ENCODE measurements at regions of chr6 and their contacts with region 1.

Region 1: DNA sequence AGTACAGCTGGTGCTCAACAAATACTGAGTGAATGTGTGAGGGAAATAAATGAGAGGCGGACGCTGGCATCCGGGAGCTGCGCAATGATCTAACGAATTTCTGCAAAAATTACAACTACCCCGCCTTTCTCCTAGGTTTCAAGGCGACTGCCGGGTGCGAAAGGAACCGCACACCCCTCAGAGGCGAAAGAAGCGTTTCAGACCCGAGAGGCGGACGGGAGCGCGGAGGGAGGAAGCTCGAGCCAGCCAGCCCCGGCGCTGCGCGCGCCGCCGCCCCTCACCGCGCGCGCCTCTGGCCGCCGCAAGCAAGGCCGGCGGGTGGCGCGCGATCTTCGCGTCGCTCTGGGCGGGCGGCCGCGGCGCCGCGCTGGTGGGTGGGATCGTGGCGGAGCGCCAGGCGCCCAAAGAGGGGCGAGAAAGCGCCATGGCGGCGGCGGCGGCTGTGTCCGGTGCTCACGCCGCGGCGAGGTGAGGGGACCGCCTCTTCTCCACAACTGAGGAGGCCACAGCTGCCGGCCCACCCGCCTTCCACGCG is at the start of gene BLTP3A:
- DNase-seq: peak; percentile 74 to 78 (median 75)
- H3K4me3 ChIP-seq: peak within 1 kb of the TSS; percentile 79 to 85
- H3K4me3 Mint-ChIP-seq: peak within 1 kb of the TSS; percentile 91 to 99 (median 98)
- H3K27ac ChIP-seq: peak within 1 kb of the TSS; percentile 72
- H3K27ac Mint-ChIP-seq: peak within 1 kb of the TSS; percentile 91 to 97 (median 95)
- H3K4me1 ChIP-seq: peaks cover 23% of the 10 kb centered on the region
- H3K4me1 Mint-ChIP-seq: peaks cover 15 to 36% (median 21%) of the 10 kb centered on the region in 4 donors
- H3K27me3 ChIP-seq: no peaks in the 10 kb centered on the region
- H3K27me3 Mint-ChIP-seq: no peaks in the 10 kb centered on the region
- total RNA-seq, gene BLTP3A: 11.5 to 12.0 TPM

Region 2: GRCh38 chr6:34526992-34527728 is 264.6 kb before region 1 on chr6:
- CTCF ChIA-PET with region 1: no interaction called
- POLR2A ChIA-PET with region 1: interaction called, 3 read pairs
- intact Hi-C with region 1: loop called (anchors 5 kb)
- DNase-seq: peak; percentile 93 to 94 (median 93)
- H3K4me3 ChIP-seq: peak overlapping the region in 1 of 2 donors; percentile 20
- H3K4me3 Mint-ChIP-seq: peak overlapping the region in 6 of 8 donors; percentile 57 to 70 (median 64)
- H3K27ac ChIP-seq: no peak overlapping the region
- H3K27ac Mint-ChIP-seq: peak overlapping the region; percentile 27 to 78 (median 68)
- H3K4me1 ChIP-seq: peaks cover 15% of the 10 kb centered on the region
- H3K4me1 Mint-ChIP-seq: peaks cover 5 to 17% (median 7%) of the 10 kb centered on the region in 4 donors
- H3K27me3 ChIP-seq: no peaks in the 10 kb centered on the region
- H3K27me3 Mint-ChIP-seq: no peaks in the 10 kb centered on the region

Region 3: GRCh38 chr6:34680802-34681515 is 110.8 kb before region 1 on chr6:
- CTCF ChIA-PET with region 1: no interaction called
- POLR2A ChIA-PET with region 1: no interaction called
- intact Hi-C with region 1: no loop called
- DNase-seq: no peak
- H3K4me3 ChIP-seq: no peak overlapping the region
- H3K4me3 Mint-ChIP-seq: no peak overlapping the region
- H3K27ac ChIP-seq: no peak overlapping the region
- H3K27ac Mint-ChIP-seq: no peak overlapping the region
- H3K4me1 ChIP-seq: peaks cover 32% of the 10 kb centered on the region
- H3K4me1 Mint-ChIP-seq: peaks cover 27 to 42% (median 32%) of the 10 kb centered on the region in 4 donors
- H3K27me3 ChIP-seq: no peaks in the 10 kb centered on the region
- H3K27me3 Mint-ChIP-seq: no peaks in the 10 kb centered on the region

Region 4: DNA sequence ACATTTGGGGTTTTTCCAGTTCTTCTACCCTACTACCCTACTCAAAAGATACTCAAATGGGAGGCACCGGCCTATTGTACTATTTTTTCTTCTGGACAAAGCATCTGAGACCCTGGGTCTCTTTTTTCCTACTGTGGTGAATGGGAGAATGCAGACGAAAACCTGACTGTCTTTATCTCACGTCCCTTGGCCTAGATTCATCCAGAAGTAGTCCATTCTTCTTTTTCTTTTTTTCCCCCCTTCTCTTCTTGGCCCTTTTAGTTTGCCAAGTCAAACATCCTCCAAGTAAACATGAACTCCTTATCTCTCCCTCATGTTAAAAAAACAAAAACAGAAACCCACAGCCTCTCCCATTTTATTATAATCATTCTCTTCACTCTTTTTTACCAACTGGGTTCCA is 86.5 kb before region 1 on chr6:
- CTCF ChIA-PET with region 1: no interaction called
- POLR2A ChIA-PET with region 1: no interaction called
- intact Hi-C with region 1: no loop called
- DNase-seq: no peak
- H3K4me3 ChIP-seq: no peak overlapping the region
- H3K4me3 Mint-ChIP-seq: no peak overlapping the region
- H3K27ac ChIP-seq: no peak overlapping the region
- H3K27ac Mint-ChIP-seq: peak overlapping the region in 4 of 7 donors; percentile 15 to 63 (median 41)
- H3K4me1 ChIP-seq: no peaks in the 10 kb centered on the region
- H3K4me1 Mint-ChIP-seq: peaks cover 0 to 8% (median under 1%) of the 10 kb centered on the region in 4 donors
- H3K27me3 ChIP-seq: no peaks in the 10 kb centered on the region
- H3K27me3 Mint-ChIP-seq: peaks cover 0 to 2% of the 10 kb centered on the region in 2 donors

Region 5: DNA sequence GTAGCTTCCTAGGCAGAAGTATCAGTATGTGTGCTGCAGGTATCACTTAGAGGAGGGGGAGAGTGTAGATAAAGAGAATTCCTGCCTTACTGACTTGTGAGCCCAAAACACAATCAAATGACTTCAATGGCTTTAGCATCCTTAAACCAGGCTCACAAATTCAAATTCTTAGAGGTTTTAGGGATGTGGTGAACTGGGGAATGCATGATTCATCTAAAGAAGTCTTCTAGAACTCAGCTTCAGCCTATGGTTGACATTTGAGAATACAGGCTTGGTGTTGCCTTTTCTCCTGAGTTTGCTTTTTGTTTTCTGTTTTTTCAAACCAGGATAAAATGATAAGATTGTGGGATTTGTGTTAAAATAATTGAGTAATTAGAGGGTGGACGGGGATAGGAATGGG is 20.0 kb before region 1 on chr6:
- CTCF ChIA-PET with region 1: no interaction called
- POLR2A ChIA-PET with region 1: interaction called, 16 read pairs
- intact Hi-C with region 1: no loop called
- DNase-seq: no peak
- H3K4me3 ChIP-seq: no peak overlapping the region
- H3K4me3 Mint-ChIP-seq: no peak overlapping the region
- H3K27ac ChIP-seq: no peak overlapping the region
- H3K27ac Mint-ChIP-seq: peak overlapping the region in 1 of 7 donors; percentile 19
- H3K4me1 ChIP-seq: peaks cover 10% of the 10 kb centered on the region
- H3K4me1 Mint-ChIP-seq: peaks cover 2 to 20% (median 5%) of the 10 kb centered on the region in 4 donors
- H3K27me3 ChIP-seq: no peaks in the 10 kb centered on the region
- H3K27me3 Mint-ChIP-seq: no peaks in the 10 kb centered on the region

Region 6: GRCh38 chr6:34834789-34835518 is 43.2 kb after region 1 on chr6:
- CTCF ChIA-PET with region 1: no interaction called
- POLR2A ChIA-PET with region 1: no interaction called
- intact Hi-C with region 1: no loop called
- DNase-seq: no peak
- H3K4me3 ChIP-seq: no peak overlapping the region
- H3K4me3 Mint-ChIP-seq: no peak overlapping the region
- H3K27ac ChIP-seq: no peak overlapping the region
- H3K27ac Mint-ChIP-seq: no peak overlapping the region
- H3K4me1 ChIP-seq: no peaks in the 10 kb centered on the region
- H3K4me1 Mint-ChIP-seq: peaks cover 0 to 4% (median under 1%) of the 10 kb centered on the region in 4 donors
- H3K27me3 ChIP-seq: no peaks in the 10 kb centered on the region
- H3K27me3 Mint-ChIP-seq: no peaks in the 10 kb centered on the region

Region 7: DNA sequence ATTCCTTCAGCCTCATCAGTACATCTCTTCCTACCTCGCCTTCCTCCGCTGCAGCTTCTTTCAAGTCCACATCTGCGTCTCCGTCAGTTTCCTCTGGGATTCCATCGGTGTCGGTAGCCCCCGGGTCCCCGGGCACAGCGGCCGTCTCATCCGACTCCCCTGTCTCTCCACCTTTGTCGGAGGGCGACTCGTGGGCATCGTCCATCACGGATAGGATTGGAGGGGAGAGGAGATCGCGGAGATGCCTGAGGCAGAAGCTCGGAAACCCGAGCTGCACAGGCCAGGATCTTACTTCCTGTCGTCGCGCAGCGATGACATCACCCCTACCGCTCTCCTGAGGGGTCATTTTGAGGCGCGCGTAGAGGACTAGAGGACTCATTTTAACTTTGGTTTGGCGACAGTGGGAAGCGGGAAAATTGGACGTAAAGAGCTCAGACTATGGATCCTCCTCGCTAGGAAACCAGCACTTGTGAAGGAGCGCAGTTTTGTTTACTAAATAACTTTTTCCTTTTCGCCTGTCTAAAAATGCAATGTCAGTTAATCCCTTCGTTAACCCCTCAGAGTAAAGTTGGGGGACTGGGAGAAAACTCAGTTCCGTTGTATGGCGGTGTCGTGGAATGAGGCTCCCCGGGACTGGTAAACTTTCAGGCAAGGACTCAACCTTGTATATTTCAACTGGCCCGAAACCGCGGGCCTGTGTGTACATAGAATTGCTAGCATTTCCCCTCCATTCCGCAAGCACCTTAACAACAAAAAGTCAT is 96.2 kb after region 1 on chr6 and contains the start of gene TAF11:
- CTCF ChIA-PET with region 1: no interaction called
- POLR2A ChIA-PET with region 1: interaction called, 50 read pairs
- intact Hi-C with region 1: loop called (anchors 1 kb)
- DNase-seq: peak; percentile 87 to 93 (median 88)
- H3K4me3 ChIP-seq: peak within 1 kb of the TSS; percentile 70 to 91
- H3K4me3 Mint-ChIP-seq: peak within 1 kb of the TSS; percentile 97 to 100 (median 99)
- H3K27ac ChIP-seq: peak within 1 kb of the TSS; percentile 94
- H3K27ac Mint-ChIP-seq: peak within 1 kb of the TSS; percentile 95 to 100 (median 99)
- H3K4me1 ChIP-seq: peaks cover 31% of the 10 kb centered on the region
- H3K4me1 Mint-ChIP-seq: peaks cover 31 to 65% (median 52%) of the 10 kb centered on the region in 4 donors
- H3K27me3 ChIP-seq: no peaks in the 10 kb centered on the region
- H3K27me3 Mint-ChIP-seq: no peaks in the 10 kb centered on the region
- total RNA-seq, gene TAF11: 25.3 to 26.1 TPM

Region 8: DNA sequence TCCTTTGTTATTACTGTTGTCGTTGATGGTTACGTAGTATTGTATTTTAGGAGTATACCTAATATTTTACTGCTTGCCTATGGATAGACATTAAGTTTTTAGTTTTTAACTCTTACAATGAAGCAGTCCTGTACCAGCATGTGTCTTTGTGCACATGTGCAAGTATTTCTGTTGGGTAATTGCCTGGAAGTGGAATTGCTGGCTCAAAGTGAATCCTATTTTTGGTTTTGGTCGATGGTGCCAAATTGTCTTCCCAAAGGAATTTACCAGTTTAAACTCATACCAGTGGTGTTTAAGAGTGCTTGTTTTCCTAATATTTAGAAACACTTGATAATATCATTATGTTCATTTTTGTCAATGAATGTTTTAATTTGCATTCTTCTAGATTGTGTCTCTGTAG is 172.8 kb after region 1 on chr6:
- CTCF ChIA-PET with region 1: no interaction called
- POLR2A ChIA-PET with region 1: no interaction called
- intact Hi-C with region 1: no loop called
- DNase-seq: no peak
- H3K4me3 ChIP-seq: no peak overlapping the region
- H3K4me3 Mint-ChIP-seq: no peak overlapping the region
- H3K27ac ChIP-seq: no peak overlapping the region
- H3K27ac Mint-ChIP-seq: peak overlapping the region in 1 of 7 donors; percentile 27
- H3K4me1 ChIP-seq: no peaks in the 10 kb centered on the region
- H3K4me1 Mint-ChIP-seq: peaks cover 0 to 8% (median 6%) of the 10 kb centered on the region in 4 donors
- H3K27me3 ChIP-seq: no peaks in the 10 kb centered on the region
- H3K27me3 Mint-ChIP-seq: no peaks in the 10 kb centered on the region

Measured in CD4-positive, alpha-beta memory T cell (primary cell).